ENCODE measurements at regions of chr12 and their contacts with region 1.

Region 1: DNA sequence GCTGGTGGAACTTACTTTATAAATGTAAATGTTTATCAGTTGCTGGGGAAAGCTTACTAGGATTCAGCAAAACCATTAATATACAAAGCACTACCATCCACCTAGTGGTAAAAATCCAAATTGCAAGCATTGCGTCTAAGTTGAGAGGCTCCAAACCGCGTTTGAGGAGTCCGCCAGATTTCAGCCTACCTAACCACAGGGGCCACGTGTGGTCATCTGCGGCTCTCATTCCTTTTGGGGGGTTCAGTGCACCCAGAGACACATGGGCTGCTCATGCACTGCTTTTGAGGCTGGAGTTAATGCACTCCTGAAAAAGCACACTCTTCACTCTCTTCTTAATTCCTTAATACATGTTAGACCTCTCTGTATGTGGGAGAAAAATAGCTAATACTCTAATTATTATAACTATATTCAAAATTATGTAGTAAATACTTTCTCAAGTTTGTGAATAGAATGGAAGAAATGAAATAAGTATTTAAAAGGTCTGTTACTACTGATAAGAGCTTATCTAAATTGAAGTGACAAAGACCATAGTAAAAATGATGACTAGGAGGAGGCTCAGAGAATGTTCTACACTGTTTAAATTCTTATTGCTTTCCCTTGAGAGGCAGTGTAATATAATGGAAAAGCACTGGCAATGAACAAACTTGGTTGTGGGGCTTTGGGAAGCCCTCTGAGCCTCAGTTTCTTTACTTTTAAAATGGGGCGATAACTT is 41.4 kb upstream of the MANSC4 start:
- DNase-seq: no peak
- ATAC-seq: peak; percentile 79
- H3K4me3 ChIP-seq: no peak overlapping the region
- H3K27ac ChIP-seq: no peak overlapping the region
- H3K4me1 ChIP-seq: no peaks in the 10 kb centered on the region
- H3K27me3 ChIP-seq: no peaks in the 10 kb centered on the region

Region 2: GRCh38 chr12:27733052-27733656 is 88.3 kb before region 1 on chr12:
- intact Hi-C with region 1: loop called (anchors 2 kb)
- DNase-seq: no peak
- ATAC-seq: no peak
- H3K4me3 ChIP-seq: no peak overlapping the region
- H3K27ac ChIP-seq: no peak overlapping the region
- H3K4me1 ChIP-seq: no peaks in the 10 kb centered on the region
- H3K27me3 ChIP-seq: no peaks in the 10 kb centered on the region

Region 3: GRCh38 chr12:27779920-27780611 is 41.4 kb before region 1 on chr12 and contains the starts of genes KLHL42 and MANSC4:
- intact Hi-C with region 1: loop called in 1 of 2 experiments (anchors 5 kb)
- DNase-seq: peak; percentile 87 to 94
- ATAC-seq: peak; percentile 93
- H3K4me3 ChIP-seq: peak within 1 kb of the TSS; percentile 36 to 88
- H3K27ac ChIP-seq: peak within 1 kb of the TSS; percentile 98 to 100
- H3K4me1 ChIP-seq: peaks cover 2% of the 10 kb centered on the region in 2 donors
- H3K27me3 ChIP-seq: no peaks in the 10 kb centered on the region
- total RNA-seq, gene KLHL42: 57.3 to 58.7 TPM
- total RNA-seq, gene MANSC4: not detected

Region 4: DNA sequence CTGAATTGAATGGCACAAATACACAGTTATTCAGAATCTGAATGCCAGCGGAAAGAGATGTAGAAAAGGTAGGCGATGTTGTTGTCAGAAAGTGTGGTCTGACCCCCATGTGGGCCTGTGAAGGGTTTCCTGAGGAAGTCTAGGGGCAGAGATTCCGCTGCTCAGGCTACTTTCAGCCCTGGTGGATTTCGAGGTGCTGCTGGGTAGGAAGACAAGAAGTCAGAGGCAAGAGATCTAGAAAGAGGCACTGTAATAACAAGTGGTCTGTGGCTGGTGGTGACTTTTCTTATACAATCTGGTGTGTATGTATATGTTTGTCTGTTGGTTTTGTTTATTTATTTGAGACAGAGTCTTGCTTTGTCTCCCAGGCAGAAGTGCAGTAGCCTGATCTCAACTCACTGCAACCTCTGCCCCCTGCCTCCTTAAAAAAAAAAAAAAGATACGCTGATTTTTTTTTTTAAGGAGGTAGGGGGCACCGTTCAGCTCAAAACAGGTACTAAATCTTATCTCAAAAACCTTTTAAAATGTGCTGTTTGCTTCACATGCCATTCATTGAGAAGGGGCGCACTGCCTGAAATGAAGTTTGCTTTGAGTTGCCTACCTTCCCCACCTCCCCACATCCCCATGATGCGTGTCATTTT is 14.2 kb before region 1 on chr12:
- intact Hi-C with region 1: no loop called
- DNase-seq: no peak
- ATAC-seq: no peak
- H3K4me3 ChIP-seq: no peak overlapping the region
- H3K27ac ChIP-seq: peak overlapping the region; percentile 30 to 99
- H3K4me1 ChIP-seq: peaks cover 5 to 8% of the 10 kb centered on the region in 2 donors
- H3K27me3 ChIP-seq: no peaks in the 10 kb centered on the region

Region 5: DNA sequence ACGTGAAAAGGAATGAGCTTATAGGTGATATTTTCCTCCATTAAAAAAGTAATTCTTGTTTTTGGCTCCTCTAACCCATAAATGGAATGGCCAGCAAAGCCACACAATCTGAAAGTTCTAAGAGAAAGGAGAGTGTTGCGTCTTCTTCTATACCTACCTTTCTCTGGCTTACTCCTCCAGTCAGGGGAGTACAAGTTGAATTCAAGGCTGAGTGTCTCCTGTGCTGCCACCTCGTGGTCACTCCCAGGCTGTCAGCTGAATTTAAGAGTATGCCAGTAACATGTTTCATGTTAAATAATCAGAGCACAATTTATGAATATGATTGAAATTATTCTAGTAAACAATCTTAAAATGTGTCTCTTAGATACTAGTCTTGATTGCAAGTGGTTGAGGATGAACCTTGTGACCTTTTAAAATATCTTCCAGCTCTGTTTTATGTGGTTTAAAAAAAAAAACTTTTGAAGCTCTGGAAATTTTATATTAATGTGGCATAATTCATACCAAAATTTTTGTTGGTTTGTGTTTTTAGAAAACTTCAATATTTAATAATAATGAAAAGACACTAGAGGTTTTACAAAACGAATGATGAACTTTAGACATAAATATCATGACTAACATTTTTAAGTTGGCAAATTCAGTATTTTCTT is 119.5 kb after region 1 on chr12:
- intact Hi-C with region 1: loop called (anchors 10 kb)
- DNase-seq: peak; percentile 75 to 90
- ATAC-seq: peak; percentile 79
- H3K4me3 ChIP-seq: no peak overlapping the region
- H3K27ac ChIP-seq: no peak overlapping the region
- H3K4me1 ChIP-seq: peaks cover 0 to 3% of the 10 kb centered on the region in 2 donors
- H3K27me3 ChIP-seq: no peaks in the 10 kb centered on the region

Measured in aorta (tissue), 5 donors.